Ascending aorta (tissue), 2 donors: ENCODE measurements at regions of chr2 and their contacts with region 1.

Region 1: GRCh38 chr2:235106874-235107639 is 155.2 kb downstream of the SH3BP4 start:
- DNase-seq: peak in 1 of 2 donors; percentile 79
- H3K4me3 ChIP-seq: no peak overlapping the region
- H3K27ac ChIP-seq: no peak overlapping the region
- H3K4me1 ChIP-seq: no peaks in the 10 kb centered on the region
- H3K27me3 ChIP-seq: no peaks in the 10 kb centered on the region
- CTCF ChIP-seq: peak; percentile 51 to 70 (median 63)

Region 2: GRCh38 chr2:234550511-234551107 is 556.4 kb before region 1 on chr2:
- intact Hi-C with region 1: loop called (anchors 1 kb)
- DNase-seq: peak in 1 of 2 donors; percentile 71
- H3K4me3 ChIP-seq: no peak overlapping the region
- H3K27ac ChIP-seq: no peak overlapping the region
- H3K4me1 ChIP-seq: no peaks in the 10 kb centered on the region
- H3K27me3 ChIP-seq: no peaks in the 10 kb centered on the region
- CTCF ChIP-seq: peak; percentile 83 to 98 (median 93)

Region 3: DNA sequence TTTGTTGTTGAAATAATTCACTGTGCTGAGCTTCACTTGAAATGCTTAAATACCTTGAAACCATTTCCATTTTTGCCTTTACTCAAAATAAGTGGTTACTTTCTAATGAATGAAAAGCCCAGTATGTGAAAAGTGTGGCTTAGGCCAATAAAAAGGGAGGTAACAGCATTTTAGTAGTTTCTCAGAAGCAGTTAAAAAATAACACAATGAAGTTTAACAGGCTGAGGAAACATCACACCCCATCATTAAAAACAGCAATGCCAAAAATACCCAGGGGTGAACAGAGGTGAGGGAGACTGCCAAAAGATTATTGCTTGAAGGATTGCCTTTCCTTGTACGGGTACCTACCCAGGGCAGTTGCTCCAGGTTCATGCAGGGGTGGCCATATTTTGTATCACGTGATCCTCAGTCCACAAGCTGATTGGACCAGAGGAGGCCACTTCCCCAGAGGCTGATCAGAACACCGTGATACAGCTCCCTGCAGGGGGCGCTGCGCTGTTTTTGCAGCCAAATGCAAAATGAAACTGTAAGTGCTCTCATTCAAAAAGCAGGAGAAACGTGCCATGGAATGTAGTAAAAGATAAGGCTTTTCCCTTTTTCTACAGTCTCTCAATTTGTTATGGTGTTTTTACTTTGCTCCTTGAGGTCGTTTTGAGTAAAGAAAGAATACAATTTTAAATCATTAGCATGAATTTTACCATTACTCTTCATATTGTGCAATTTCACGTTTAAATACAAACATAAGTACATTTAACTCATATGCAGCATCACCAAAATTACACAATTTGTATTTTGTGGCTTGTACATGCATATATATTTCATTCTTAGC is 225.4 kb before region 1 on chr2:
- intact Hi-C with region 1: loop called (anchors 5 kb)
- DNase-seq: peak; percentile 32 to 87
- H3K4me3 ChIP-seq: peak overlapping the region in 1 of 2 donors; percentile 42
- H3K27ac ChIP-seq: no peak overlapping the region
- H3K4me1 ChIP-seq: peaks cover 0 to 9% of the 10 kb centered on the region in 2 donors
- H3K27me3 ChIP-seq: no peaks in the 10 kb centered on the region
- CTCF ChIP-seq: peak; percentile 51 to 73 (median 68)

Region 4: GRCh38 chr2:235070063-235070706 is 36.9 kb before region 1 on chr2:
- intact Hi-C with region 1: no loop called
- DNase-seq: no peak
- H3K4me3 ChIP-seq: no peak overlapping the region
- H3K27ac ChIP-seq: peak overlapping the region in 1 of 2 donors; percentile 45
- H3K4me1 ChIP-seq: peaks cover 0 to 6% of the 10 kb centered on the region in 2 donors
- H3K27me3 ChIP-seq: no peaks in the 10 kb centered on the region
- CTCF ChIP-seq: no peak